CD14-positive monocyte (primary cell): ENCODE measurements at regions of chr18 and their contacts with region 1.

Region 1: GRCh38 chr18:65235966-65236624 is 514.7 kb upstream of the CDH7 start:
- DNase-seq: no peak
- H3K4me3 ChIP-seq: no peak overlapping the region
- H3K4me3 Mint-ChIP-seq: no peak overlapping the region
- H3K27ac ChIP-seq: no peak overlapping the region
- H3K27ac Mint-ChIP-seq: no peak overlapping the region
- H3K4me1 ChIP-seq: no peaks in the 10 kb centered on the region
- H3K4me1 Mint-ChIP-seq: no peaks in the 10 kb centered on the region
- H3K27me3 ChIP-seq: no peaks in the 10 kb centered on the region
- H3K27me3 Mint-ChIP-seq: peaks cover 0 to 1% (median 0%) of the 10 kb centered on the region in 3 donors
- CTCF ChIP-seq: no peak

Region 2: DNA sequence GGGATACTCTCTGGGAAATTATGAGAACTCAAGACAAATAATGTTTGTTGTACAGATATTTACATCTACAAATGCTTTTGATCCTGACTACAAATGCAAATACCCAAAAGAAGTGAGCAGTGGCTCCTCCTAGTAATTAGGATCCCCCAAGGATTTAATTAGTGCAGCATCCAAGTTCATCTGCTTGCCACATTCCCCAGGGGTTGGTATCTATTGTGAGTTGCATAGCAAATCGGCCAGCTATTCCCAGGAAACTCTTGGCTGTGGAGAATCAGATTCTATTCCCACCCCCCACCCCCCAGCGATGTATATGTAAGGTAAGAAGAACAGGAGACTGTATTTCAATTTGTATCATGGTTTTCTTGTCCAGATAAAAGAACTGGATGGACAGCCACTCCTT is 210.3 kb before region 1 on chr18:
- intact Hi-C with region 1: no loop called
- DNase-seq: no peak
- H3K4me3 ChIP-seq: no peak overlapping the region
- H3K4me3 Mint-ChIP-seq: no peak overlapping the region
- H3K27ac ChIP-seq: no peak overlapping the region
- H3K27ac Mint-ChIP-seq: no peak overlapping the region
- H3K4me1 ChIP-seq: no peaks in the 10 kb centered on the region
- H3K4me1 Mint-ChIP-seq: no peaks in the 10 kb centered on the region
- H3K27me3 ChIP-seq: no peaks in the 10 kb centered on the region
- H3K27me3 Mint-ChIP-seq: peaks cover 0 to 1% (median 0%) of the 10 kb centered on the region in 3 donors
- CTCF ChIP-seq: no peak

Region 3: GRCh38 chr18:65145312-65145711 is 90.8 kb before region 1 on chr18:
- intact Hi-C with region 1: no loop called
- DNase-seq: no peak
- H3K4me3 ChIP-seq: no peak overlapping the region
- H3K4me3 Mint-ChIP-seq: no peak overlapping the region
- H3K27ac ChIP-seq: no peak overlapping the region
- H3K27ac Mint-ChIP-seq: no peak overlapping the region
- H3K4me1 ChIP-seq: no peaks in the 10 kb centered on the region
- H3K4me1 Mint-ChIP-seq: no peaks in the 10 kb centered on the region
- H3K27me3 ChIP-seq: no peaks in the 10 kb centered on the region
- H3K27me3 Mint-ChIP-seq: no peaks in the 10 kb centered on the region
- CTCF ChIP-seq: no peak

Region 4: DNA sequence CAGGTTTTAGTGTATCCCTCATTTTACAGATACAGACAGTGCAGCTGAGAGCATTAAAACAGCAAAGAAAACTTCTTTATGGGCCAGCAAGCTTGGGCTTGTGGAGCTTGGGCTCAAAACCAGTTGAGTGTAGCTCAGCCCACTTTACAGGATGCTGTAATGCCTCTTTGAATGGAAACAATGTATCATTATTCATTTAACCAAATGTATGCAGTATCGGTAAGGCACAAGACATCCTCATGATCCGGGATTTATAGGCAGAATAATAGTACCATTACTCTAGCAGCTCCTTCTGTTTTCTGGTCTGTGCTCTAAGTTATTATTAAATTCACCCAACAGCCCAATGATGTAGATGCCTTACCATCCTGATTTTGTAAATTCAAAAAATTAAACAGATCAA is 60.4 kb before region 1 on chr18:
- intact Hi-C with region 1: loop called in 1 of 2 experiments (anchors 10 kb)
- DNase-seq: no peak
- H3K4me3 ChIP-seq: no peak overlapping the region
- H3K4me3 Mint-ChIP-seq: no peak overlapping the region
- H3K27ac ChIP-seq: no peak overlapping the region
- H3K27ac Mint-ChIP-seq: no peak overlapping the region
- H3K4me1 ChIP-seq: no peaks in the 10 kb centered on the region
- H3K4me1 Mint-ChIP-seq: no peaks in the 10 kb centered on the region
- H3K27me3 ChIP-seq: no peaks in the 10 kb centered on the region
- H3K27me3 Mint-ChIP-seq: no peaks in the 10 kb centered on the region
- CTCF ChIP-seq: no peak